CD8-positive, alpha-beta T cell (primary cell): ENCODE measurements at regions of chr5 and their contacts with region 1.

Region 1: DNA sequence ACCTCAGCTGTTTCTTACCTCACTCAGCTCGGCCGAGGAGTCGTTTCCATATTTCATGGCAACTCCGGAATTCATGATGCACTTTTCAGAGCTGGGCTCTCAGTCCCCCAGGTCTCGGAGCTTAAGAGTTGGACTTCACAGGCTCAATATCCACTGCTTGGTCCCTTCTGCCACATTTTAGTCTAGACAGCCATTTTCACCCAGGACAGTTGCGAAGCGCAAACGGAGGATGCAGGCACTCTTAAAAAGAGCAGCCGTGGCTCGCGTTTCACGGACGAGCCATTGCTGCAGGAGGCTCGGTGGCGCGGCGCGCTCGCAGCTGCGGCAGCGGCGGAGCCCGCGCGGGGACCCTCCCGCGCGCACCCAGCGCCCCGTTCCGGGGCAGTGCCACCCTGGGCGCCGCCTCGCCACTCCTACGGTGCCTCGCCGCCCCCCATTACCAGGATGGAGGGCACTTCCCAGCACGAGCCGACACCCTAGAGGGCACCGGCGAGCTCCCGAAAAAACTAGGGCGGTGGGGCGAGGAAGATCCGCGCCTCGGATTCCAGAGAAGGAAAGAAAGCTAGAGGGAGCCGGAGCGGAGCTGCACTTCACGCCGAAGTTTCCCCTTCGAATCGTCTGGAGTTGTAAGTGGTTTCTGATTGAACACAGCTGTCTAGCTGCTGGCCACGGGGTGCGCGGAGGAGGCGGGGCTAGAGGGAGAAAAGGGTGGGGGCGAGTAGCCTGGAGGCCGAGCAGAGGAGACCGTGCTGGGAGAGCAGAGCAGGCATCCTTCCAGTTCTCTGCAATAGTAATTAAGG is 140.3 kb downstream of the TSSK1B start:
- DNase-seq: peak; percentile 56 to 84 (median 75)
- ATAC-seq: peak; percentile 91
- H3K4me3 ChIP-seq: peak overlapping the region; percentile 70 to 76
- H3K4me3 Mint-ChIP-seq: peak overlapping the region; percentile 94
- H3K27ac ChIP-seq: peak overlapping the region; percentile 20 to 46
- H3K27ac Mint-ChIP-seq: peak overlapping the region; percentile 75
- H3K4me1 ChIP-seq: peaks cover 17% of the 10 kb centered on the region
- H3K4me1 Mint-ChIP-seq: peaks cover 34% of the 10 kb centered on the region
- H3K27me3 ChIP-seq: peaks cover 0 to 9% of the 10 kb centered on the region in 2 experiments
- H3K27me3 Mint-ChIP-seq: peaks cover 16% of the 10 kb centered on the region
- CTCF ChIP-seq: no peak

Region 2: GRCh38 chr5:112757468-112758208 is 536.9 kb before region 1 on chr5:
- CTCF ChIA-PET with region 1: no interaction called
- POLR2A ChIA-PET with region 1: no interaction called
- intact Hi-C with region 1: no loop called
- DNase-seq: peak in 3 of 9 experiments; percentile 51 to 76 (median 69)
- ATAC-seq: peak; percentile 84
- H3K4me3 ChIP-seq: no peak overlapping the region
- H3K4me3 Mint-ChIP-seq: no peak overlapping the region
- H3K27ac ChIP-seq: no peak overlapping the region
- H3K27ac Mint-ChIP-seq: peak overlapping the region; percentile 34
- H3K4me1 ChIP-seq: no peaks in the 10 kb centered on the region
- H3K4me1 Mint-ChIP-seq: peaks cover 12% of the 10 kb centered on the region
- H3K27me3 ChIP-seq: no peaks in the 10 kb centered on the region
- H3K27me3 Mint-ChIP-seq: no peaks in the 10 kb centered on the region
- CTCF ChIP-seq: peak; percentile 83

Region 3: DNA sequence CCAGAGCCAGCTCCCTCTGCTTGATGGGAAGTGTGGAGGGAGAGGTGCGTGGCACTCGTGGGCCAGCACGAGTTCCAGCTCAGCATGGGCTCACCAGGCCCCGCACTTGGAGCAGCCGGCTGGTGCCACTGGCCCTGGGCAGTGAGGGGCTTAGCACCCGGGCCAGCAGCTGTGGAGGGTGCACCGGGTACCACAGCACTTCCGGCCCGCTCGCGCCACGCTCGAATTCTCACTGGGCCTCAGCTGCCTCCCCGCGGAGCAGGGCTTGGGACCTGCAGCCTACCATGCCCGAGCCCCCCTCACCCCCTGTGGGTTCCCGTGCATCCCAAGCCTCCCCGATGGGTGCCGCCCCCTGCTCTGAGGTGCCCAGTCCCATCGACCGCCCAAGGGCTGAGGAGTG is 219.5 kb before region 1 on chr5:
- CTCF ChIA-PET with region 1: interaction called, 13 read pairs
- POLR2A ChIA-PET with region 1: interaction called, 4 read pairs
- intact Hi-C with region 1: loop called in 1 of 2 experiments (anchors 5 kb)
- DNase-seq: no peak
- ATAC-seq: no peak
- H3K4me3 ChIP-seq: no peak overlapping the region
- H3K4me3 Mint-ChIP-seq: no peak overlapping the region
- H3K27ac ChIP-seq: no peak overlapping the region
- H3K27ac Mint-ChIP-seq: no peak overlapping the region
- H3K4me1 ChIP-seq: peaks cover 26% of the 10 kb centered on the region
- H3K4me1 Mint-ChIP-seq: peaks cover 45% of the 10 kb centered on the region
- H3K27me3 ChIP-seq: no peaks in the 10 kb centered on the region
- H3K27me3 Mint-ChIP-seq: no peaks in the 10 kb centered on the region
- CTCF ChIP-seq: no peak

Region 4: GRCh38 chr5:113199122-113199905 is 95.2 kb before region 1 on chr5:
- CTCF ChIA-PET with region 1: no interaction called
- POLR2A ChIA-PET with region 1: no interaction called
- intact Hi-C with region 1: no loop called
- DNase-seq: no peak
- ATAC-seq: no peak
- H3K4me3 ChIP-seq: no peak overlapping the region
- H3K4me3 Mint-ChIP-seq: no peak overlapping the region
- H3K27ac ChIP-seq: no peak overlapping the region
- H3K27ac Mint-ChIP-seq: no peak overlapping the region
- H3K4me1 ChIP-seq: no peaks in the 10 kb centered on the region
- H3K4me1 Mint-ChIP-seq: peaks cover 11% of the 10 kb centered on the region
- H3K27me3 ChIP-seq: no peaks in the 10 kb centered on the region
- H3K27me3 Mint-ChIP-seq: no peaks in the 10 kb centered on the region
- CTCF ChIP-seq: no peak